ENCODE measurements at regions of chr7 and their contacts with region 1.

Region 1: GRCh38 chr7:101815835-101816493 is 1.5 kb upstream of the CUX1 start:
- DNase-seq: peak; percentile 81 to 89
- ATAC-seq: peak; percentile 75
- H3K4me3 ChIP-seq: peak overlapping the region; percentile 94 to 100
- H3K27ac ChIP-seq: peak overlapping the region; percentile 61 to 97
- H3K4me1 ChIP-seq: no peaks in the 10 kb centered on the region
- H3K27me3 ChIP-seq: no peaks in the 10 kb centered on the region

Region 2: DNA sequence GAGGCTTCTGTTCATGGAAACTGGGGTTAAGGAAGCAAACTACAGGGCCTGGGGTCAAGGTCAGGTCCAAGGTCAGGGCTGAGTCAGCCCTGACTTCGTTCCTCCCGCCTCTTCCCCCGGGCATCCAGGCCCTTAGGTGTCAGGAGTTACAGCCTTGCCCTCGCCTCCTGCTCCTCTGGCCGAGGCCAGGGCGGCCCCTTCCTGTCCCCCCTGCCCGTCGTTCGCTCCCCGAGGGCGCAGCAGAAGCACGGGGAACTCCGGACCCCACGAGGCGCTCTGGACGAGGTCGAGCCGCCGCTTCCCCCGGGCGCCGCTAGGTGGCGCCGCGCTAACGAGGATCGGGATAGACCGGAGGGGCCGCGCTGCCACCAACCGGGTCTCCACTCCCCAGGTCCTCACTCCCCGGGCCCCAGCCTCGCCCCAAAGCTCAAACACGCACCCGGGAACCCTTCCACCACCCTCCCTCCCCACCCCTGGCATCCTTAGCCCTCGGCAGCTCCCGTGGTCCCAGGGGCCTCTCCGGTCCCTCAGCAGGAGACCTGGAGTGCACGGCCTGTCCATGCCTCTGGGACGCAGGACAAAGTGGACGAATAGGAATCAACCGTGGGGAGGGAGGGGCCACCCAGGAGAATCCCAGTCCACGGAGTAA is 127.7 kb before region 1 on chr7:
- intact Hi-C with region 1: loop called in 1 of 2 experiments (anchors 10 kb)
- DNase-seq: peak; percentile 85 to 96
- ATAC-seq: peak; percentile 91
- H3K4me3 ChIP-seq: no peak overlapping the region
- H3K27ac ChIP-seq: no peak overlapping the region
- H3K4me1 ChIP-seq: no peaks in the 10 kb centered on the region
- H3K27me3 ChIP-seq: no peaks in the 10 kb centered on the region

Region 3: DNA sequence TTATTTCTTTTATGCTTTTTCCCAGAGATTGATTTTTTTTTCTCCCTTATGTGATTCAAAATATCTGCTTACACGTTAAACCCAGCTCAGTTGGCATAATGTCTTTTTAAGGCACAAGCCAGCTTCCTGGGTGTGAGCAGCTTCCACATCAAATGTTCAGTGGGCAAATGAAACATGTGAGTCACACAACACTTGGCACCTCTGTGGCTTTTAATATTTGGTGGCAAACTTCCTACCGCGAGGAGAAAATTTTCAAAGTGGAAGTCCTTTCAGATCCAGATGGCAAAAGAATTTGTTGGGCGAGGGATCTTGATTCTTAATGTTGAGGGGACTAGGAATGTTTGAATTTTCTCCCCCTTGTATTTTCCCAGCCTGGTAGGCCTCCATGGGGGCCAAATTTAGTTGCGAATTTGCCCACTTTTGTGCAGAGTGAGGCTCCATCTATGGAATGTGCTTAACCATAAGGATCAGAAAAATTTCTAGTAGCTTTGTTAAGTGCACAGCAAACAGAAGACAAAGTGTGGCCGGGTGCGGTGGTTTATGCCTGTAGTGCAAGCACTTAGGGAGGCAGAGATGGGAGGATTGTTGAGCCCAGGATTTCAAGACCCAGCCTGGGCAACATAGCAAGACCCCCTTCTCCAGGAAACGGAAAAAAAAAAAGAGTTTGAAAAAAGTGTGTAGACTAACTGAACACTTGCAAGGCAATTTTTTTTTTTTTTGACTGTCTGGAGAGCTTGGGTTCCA is 32.4 kb after region 1 on chr7:
- intact Hi-C with region 1: no loop called
- DNase-seq: no peak
- ATAC-seq: no peak
- H3K4me3 ChIP-seq: no peak overlapping the region
- H3K27ac ChIP-seq: no peak overlapping the region
- H3K4me1 ChIP-seq: peaks cover 2 to 3% of the 10 kb centered on the region in 2 donors
- H3K27me3 ChIP-seq: no peaks in the 10 kb centered on the region

Region 4: GRCh38 chr7:101882595-101883564 is 66.9 kb after region 1 on chr7:
- intact Hi-C with region 1: loop called (anchors 5 kb)
- DNase-seq: peak; percentile 91 to 92
- ATAC-seq: peak; percentile 93
- H3K4me3 ChIP-seq: no peak overlapping the region
- H3K27ac ChIP-seq: peak overlapping the region in 1 of 2 donors; percentile 90
- H3K4me1 ChIP-seq: peaks cover 0 to 2% of the 10 kb centered on the region in 2 donors
- H3K27me3 ChIP-seq: no peaks in the 10 kb centered on the region

Region 5: DNA sequence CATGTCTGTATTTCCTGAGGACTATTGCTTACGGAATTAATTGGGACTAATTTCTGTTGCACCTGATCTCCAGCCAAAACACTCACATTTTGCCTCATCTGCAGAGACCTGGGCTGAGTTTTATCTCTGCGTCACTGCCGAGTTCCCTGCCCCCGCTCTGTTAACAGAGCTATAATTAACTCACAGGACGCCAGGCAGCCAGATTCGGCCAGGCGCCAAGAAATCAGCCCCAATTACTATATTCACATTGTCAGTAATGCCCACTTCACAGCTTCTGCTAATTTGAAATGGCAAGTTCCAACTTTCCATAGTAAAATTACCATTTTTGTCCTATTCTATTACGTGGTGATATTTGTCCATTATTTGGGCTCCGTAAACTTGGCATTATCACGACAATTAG is 131.9 kb after region 1 on chr7:
- intact Hi-C with region 1: loop called in 1 of 2 experiments (anchors 5 kb)
- DNase-seq: peak; percentile 79 to 90
- ATAC-seq: no peak
- H3K4me3 ChIP-seq: no peak overlapping the region
- H3K27ac ChIP-seq: peak overlapping the region in 1 of 2 donors; percentile 12
- H3K4me1 ChIP-seq: peaks cover 3 to 5% of the 10 kb centered on the region in 2 donors
- H3K27me3 ChIP-seq: no peaks in the 10 kb centered on the region

Region 6: GRCh38 chr7:102248456-102249395 is 432.8 kb after region 1 on chr7:
- intact Hi-C with region 1: no loop called
- DNase-seq: no peak
- ATAC-seq: no peak
- H3K4me3 ChIP-seq: no peak overlapping the region
- H3K27ac ChIP-seq: no peak overlapping the region
- H3K4me1 ChIP-seq: no peaks in the 10 kb centered on the region
- H3K27me3 ChIP-seq: no peaks in the 10 kb centered on the region

Measured in aorta (tissue), 5 donors.